ENCODE measurements at regions of chr16 and their contacts with region 1.

Region 1: GRCh38 chr16:69709456-69710084 is 16.8 kb downstream of the NQO1 start:
- DNase-seq: no peak
- ATAC-seq: peak; percentile 48; the same call in 1 of the 2 replicates
- H3K4me3 ChIP-seq: no peak overlapping the region
- H3K27ac ChIP-seq: no peak overlapping the region
- H3K4me1 ChIP-seq: no peaks in the 10 kb centered on the region
- H3K27me3 ChIP-seq: no peaks in the 10 kb centered on the region
- CTCF ChIP-seq: peak; percentile 74

Region 2: GRCh38 chr16:69386596-69386995 is 323.0 kb before region 1 on chr16:
- CTCF ChIA-PET with region 1: no interaction called
- POLR2A ChIA-PET with region 1: no interaction called
- in situ Hi-C with region 1: no loop called
- intact Hi-C with region 1: no loop called
- DNase-seq: no peak
- ATAC-seq: no peak
- H3K4me3 ChIP-seq: peak overlapping the region; percentile 65 to 67
- H3K27ac ChIP-seq: peak overlapping the region; percentile 65; the same call in 1 of the 2 replicates
- H3K4me1 ChIP-seq: peaks cover 17% of the 10 kb centered on the region
- H3K27me3 ChIP-seq: no peaks in the 10 kb centered on the region
- CTCF ChIP-seq: no peak

Region 3: GRCh38 chr16:69417520-69418199 is 291.9 kb before region 1 on chr16:
- CTCF ChIA-PET with region 1: no interaction called
- POLR2A ChIA-PET with region 1: interaction called, 12 read pairs
- in situ Hi-C with region 1: no loop called
- intact Hi-C with region 1: no loop called
- DNase-seq: peak; percentile 85
- ATAC-seq: peak; percentile 94
- H3K4me3 ChIP-seq: peak overlapping the region; percentile 21 to 38; a peak in 3 of 4 replicates
- H3K27ac ChIP-seq: peak overlapping the region; percentile 96
- H3K4me1 ChIP-seq: peaks cover 50% of the 10 kb centered on the region
- H3K27me3 ChIP-seq: no peaks in the 10 kb centered on the region
- CTCF ChIP-seq: no peak

Region 4: GRCh38 chr16:69754469-69755310 is 45.1 kb after region 1 on chr16 and contains the start of gene NOB1:
- CTCF ChIA-PET with region 1: no interaction called
- POLR2A ChIA-PET with region 1: no interaction called
- in situ Hi-C with region 1: no loop called
- intact Hi-C with region 1: loop called (anchors 5 kb)
- DNase-seq: peak; percentile 89
- ATAC-seq: peak; percentile 97
- H3K4me3 ChIP-seq: peak within 1 kb of the TSS; percentile 97 to 99
- H3K27ac ChIP-seq: peak within 1 kb of the TSS; percentile 94
- H3K4me1 ChIP-seq: 0 out of 2 replicates have a peak, but pooled peaks cover 5% of the 10 kb centered on the region
- H3K27me3 ChIP-seq: no peaks in the 10 kb centered on the region
- CTCF ChIP-seq: peak; percentile 98
- total RNA-seq, gene NOB1: 48.3 TPM